Activated CD4-positive, alpha-beta T cell treated with anti-CD3 and anti-CD28 coated beads for 36 hours (primary cell): ENCODE measurements at regions of chr1 and their contacts with region 1.

Region 1: DNA sequence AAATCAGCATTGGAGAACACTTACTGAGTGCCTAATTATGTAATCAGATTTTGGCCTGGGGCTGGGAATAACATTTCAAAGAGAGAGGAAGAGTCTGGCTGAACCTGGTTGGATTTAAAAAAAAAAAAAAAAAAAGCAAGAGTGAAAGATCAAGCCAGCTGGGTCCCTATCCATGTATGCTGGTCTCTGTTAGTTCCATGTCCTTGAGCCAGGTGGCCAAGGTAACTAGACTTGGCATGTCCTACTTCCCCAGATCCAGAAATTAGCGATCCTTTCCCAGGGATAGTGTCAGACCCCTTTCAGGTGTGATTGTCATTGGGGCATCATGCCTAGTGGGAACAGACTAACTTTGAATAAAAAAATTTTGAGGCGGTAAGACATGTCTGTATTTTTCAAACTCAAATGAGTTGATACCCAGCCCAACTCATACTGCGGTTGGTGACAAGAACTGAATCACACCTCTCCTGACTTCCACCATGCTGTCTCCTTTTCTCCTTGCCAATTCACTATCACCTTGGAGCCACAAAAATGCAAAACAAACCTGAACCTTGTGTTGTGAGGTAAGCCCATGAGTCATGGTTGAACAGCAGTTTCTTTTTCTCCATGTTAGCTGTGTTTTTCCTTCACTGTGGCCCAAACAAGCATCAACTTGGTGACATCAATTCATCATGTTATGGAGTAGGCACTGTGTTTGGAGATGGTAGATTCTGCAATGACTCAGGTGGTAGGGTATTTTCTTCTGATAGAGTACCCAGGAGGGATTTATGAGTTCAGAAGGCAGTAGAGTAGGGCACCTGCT is 24.5 kb upstream of the PPP2R5A start:
- DNase-seq: peak; percentile 29
- ATAC-seq: peak; percentile 90
- H3K4me3 Mint-ChIP-seq: no peak overlapping the region
- H3K27ac Mint-ChIP-seq: peak overlapping the region; percentile 64
- H3K4me1 Mint-ChIP-seq: peaks cover 39% of the 10 kb centered on the region
- H3K27me3 Mint-ChIP-seq: no peaks in the 10 kb centered on the region

Region 2: DNA sequence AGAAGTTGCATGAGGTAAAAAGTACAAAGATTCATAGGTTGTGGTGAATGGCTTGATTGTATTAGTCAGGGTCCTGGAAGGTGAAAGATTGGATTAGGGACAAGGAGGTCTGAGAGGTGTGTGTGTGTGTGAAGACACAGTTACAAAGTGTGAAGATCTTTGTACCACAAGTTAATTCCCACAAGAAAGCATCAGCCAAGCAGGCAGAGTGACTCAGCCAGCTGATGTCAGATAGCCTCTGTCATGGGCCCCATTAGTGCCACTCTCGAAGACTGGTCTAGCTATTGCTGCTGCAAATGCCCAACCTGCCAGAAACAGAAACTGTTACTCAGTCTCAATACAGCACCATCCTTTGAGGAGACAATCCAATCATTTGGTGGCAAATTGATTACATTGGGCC is 128.7 kb before region 1 on chr1:
- CTCF ChIA-PET with region 1: no interaction called
- POLR2A ChIA-PET with region 1: no interaction called
- intact Hi-C with region 1: no loop called
- DNase-seq: peak; percentile 34
- ATAC-seq: peak; percentile 70
- H3K4me3 Mint-ChIP-seq: no peak overlapping the region
- H3K27ac Mint-ChIP-seq: no peak overlapping the region
- H3K4me1 Mint-ChIP-seq: peaks cover 3% of the 10 kb centered on the region
- H3K27me3 Mint-ChIP-seq: no peaks in the 10 kb centered on the region

Region 3: GRCh38 chr1:212218911-212219310 is 41.8 kb before region 1 on chr1:
- CTCF ChIA-PET with region 1: interaction called, 4 read pairs
- POLR2A ChIA-PET with region 1: no interaction called
- intact Hi-C with region 1: loop called in 1 of 2 experiments (anchors 2 kb)
- DNase-seq: peak; percentile 36
- ATAC-seq: peak; percentile 97
- H3K4me3 Mint-ChIP-seq: no peak overlapping the region
- H3K27ac Mint-ChIP-seq: no peak overlapping the region
- H3K4me1 Mint-ChIP-seq: peaks cover 22% of the 10 kb centered on the region
- H3K27me3 Mint-ChIP-seq: no peaks in the 10 kb centered on the region

Region 4: GRCh38 chr1:212234431-212235395 is 26.0 kb before region 1 on chr1:
- CTCF ChIA-PET with region 1: no interaction called
- POLR2A ChIA-PET with region 1: no interaction called
- intact Hi-C with region 1: loop called in 1 of 2 experiments (anchors 2 kb)
- DNase-seq: peak; percentile 61
- ATAC-seq: peak; percentile 95
- H3K4me3 Mint-ChIP-seq: no peak overlapping the region
- H3K27ac Mint-ChIP-seq: peak overlapping the region; percentile 39
- H3K4me1 Mint-ChIP-seq: peaks cover 35% of the 10 kb centered on the region
- H3K27me3 Mint-ChIP-seq: no peaks in the 10 kb centered on the region